ENCODE measurements at regions of chr3 and their contacts with region 1.

Region 1: GRCh38 chr3:12484198-12484974 is at the start of gene TSEN2:
- DNase-seq: peak; percentile 89 to 98
- H3K4me3 ChIP-seq: peak within 1 kb of the TSS; percentile 68 to 86 (median 83)
- H3K27ac ChIP-seq: peak within 1 kb of the TSS; percentile 75
- H3K4me1 ChIP-seq: peaks cover 2 to 8% (median 5%) of the 10 kb centered on the region in 4 experiments
- H3K27me3 ChIP-seq: no peaks in the 10 kb centered on the region
- CTCF ChIP-seq: peak in 1 of 3 experiments; percentile 14; a peak in 1 of 4 replicates
- EP300 ChIP-seq: no peak
- POLR2A ChIP-seq: peak; percentile 87 to 88; a peak in 2 of 3 replicates
- RAD21 ChIP-seq: 0 out of 4 replicates have a peak, but pooled peaks of 1 of the 2 experiments have one; percentile 6
- total RNA-seq, gene TSEN2: 22.4 and 22.6 TPM in 2 replicates

Region 2: DNA sequence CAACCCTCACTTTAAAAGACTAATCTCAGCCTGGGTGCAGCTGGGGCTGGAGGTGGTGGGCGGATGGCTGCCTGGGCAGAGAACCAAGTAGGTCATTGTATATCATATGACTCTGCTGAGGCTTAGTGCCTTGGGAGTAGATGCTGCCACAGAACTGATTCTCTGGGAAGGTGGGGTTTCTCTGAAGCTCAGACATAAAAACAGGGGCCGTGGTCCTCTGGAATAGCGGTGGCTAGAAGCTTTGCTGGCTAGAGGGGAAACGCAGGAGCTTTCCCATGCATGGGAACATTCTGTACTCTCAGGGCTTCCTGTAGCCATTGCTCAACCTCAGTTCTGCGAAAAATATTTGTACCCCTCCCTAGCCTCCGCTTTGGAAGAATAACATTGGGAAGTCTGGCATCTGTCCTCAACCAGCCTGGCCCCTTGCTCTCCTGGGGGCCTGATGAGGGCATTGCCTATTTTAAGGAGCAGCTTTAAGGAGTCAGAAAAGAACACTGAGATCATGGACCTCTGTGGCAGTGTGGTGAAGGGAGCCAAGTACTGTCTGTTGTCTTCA is 340.4 kb before region 1 on chr3:
- CTCF ChIA-PET with region 1: interaction called, 25 read pairs
- POLR2A ChIA-PET with region 1: no interaction called
- DNase-seq: no peak
- H3K4me3 ChIP-seq: no peak overlapping the region
- H3K27ac ChIP-seq: no peak overlapping the region
- H3K4me1 ChIP-seq: no peaks in the 10 kb centered on the region
- H3K27me3 ChIP-seq: no peaks in the 10 kb centered on the region
- CTCF ChIP-seq: no peak
- EP300 ChIP-seq: no peak
- POLR2A ChIP-seq: no peak
- RAD21 ChIP-seq: no peak

Region 3: GRCh38 chr3:12193485-12194165 is 290.8 kb before region 1 on chr3:
- CTCF ChIA-PET with region 1: interaction called, 10 read pairs
- POLR2A ChIA-PET with region 1: no interaction called
- DNase-seq: no peak
- H3K4me3 ChIP-seq: no peak overlapping the region
- H3K27ac ChIP-seq: no peak overlapping the region
- H3K4me1 ChIP-seq: peaks cover 0 to 2% (median 0%) of the 10 kb centered on the region in 4 experiments; a peak in 1 of 7 replicates
- H3K27me3 ChIP-seq: no peaks in the 10 kb centered on the region
- CTCF ChIP-seq: no peak
- EP300 ChIP-seq: no peak
- POLR2A ChIP-seq: no peak
- RAD21 ChIP-seq: no peak

Region 4: DNA sequence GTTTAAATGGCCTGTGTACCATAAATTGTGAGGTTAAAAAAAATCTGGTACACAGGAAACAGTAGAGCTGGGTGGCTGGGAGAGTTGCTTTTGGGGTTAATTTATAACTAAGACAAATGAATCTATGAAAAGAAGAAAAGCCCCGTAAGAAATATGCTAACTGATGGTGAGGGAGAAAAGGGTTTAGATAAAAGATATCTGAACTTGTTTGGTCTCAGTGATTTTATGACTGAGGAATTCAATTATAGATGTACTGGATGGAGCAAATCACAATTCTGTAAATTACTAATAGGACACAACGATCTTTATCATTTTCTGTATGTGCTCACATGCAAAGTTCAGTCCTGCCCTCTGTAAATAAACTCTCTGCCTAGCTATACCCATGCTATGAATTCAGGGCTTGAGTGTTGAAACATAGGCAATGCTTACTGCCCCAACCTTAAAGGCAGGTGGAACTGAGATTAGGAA is 167.6 kb before region 1 on chr3:
- CTCF ChIA-PET with region 1: no interaction called
- POLR2A ChIA-PET with region 1: no interaction called
- DNase-seq: no peak
- H3K4me3 ChIP-seq: no peak overlapping the region
- H3K27ac ChIP-seq: no peak overlapping the region
- H3K4me1 ChIP-seq: no peaks in the 10 kb centered on the region
- H3K27me3 ChIP-seq: no peaks in the 10 kb centered on the region
- CTCF ChIP-seq: no peak
- EP300 ChIP-seq: no peak
- POLR2A ChIP-seq: no peak
- RAD21 ChIP-seq: no peak

Region 5: DNA sequence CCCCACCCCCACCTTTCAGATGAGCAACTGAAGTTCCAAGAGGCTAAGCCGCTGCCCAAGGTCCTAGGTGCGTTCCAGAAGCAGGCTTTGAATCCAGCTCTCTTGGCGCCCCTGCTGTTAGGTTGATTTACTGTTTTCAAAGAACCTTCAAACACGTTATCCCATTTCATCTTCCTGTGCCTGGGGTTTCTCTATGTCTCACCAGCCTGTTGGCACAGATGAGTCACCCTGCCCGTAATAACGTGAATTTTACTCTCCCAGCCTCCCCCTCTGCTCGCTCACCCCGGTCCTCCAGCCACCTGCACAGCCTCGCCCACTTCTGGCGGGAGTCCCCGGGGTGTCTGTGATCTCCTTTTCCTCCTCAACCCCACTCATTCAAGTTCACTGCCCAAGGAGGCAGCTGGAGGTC is 13.1 kb before region 1 on chr3:
- CTCF ChIA-PET with region 1: interaction called, 22 read pairs
- POLR2A ChIA-PET with region 1: interaction called, 9 read pairs
- DNase-seq: no peak
- H3K4me3 ChIP-seq: no peak overlapping the region
- H3K27ac ChIP-seq: no peak overlapping the region
- H3K4me1 ChIP-seq: peaks cover 0 to 4% (median 0%) of the 10 kb centered on the region in 4 experiments; a peak in 2 of 7 replicates
- H3K27me3 ChIP-seq: no peaks in the 10 kb centered on the region
- CTCF ChIP-seq: peak in 2 of 3 experiments; percentile 6 to 34; a peak in 2 of 4 replicates
- EP300 ChIP-seq: no peak
- POLR2A ChIP-seq: no peak
- RAD21 ChIP-seq: peak; percentile 17 to 36; a peak in 2 of 4 replicates

Region 6: DNA sequence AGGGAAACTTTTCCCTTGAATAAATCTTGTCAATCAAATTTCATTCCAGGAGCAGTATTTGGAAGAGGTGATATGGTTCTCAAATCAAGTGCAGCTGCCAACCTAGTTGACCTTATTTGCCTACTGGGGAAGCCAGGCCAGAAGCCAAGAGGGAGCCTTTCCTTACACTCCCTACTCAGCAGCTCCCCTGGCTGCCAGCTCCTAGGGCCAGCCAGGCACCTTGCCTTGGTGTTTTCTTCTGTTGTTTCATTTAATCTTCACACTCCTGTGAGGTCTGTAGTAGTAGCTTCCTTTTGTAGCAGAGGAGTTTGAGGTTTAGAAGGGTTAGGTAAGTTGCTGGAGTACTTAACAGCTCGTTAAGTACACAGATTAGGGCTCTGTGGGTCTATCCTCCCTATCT is 38.3 kb after region 1 on chr3:
- CTCF ChIA-PET with region 1: no interaction called
- POLR2A ChIA-PET with region 1: no interaction called
- DNase-seq: no peak
- H3K4me3 ChIP-seq: no peak overlapping the region
- H3K27ac ChIP-seq: no peak overlapping the region
- H3K4me1 ChIP-seq: no peaks in the 10 kb centered on the region
- H3K27me3 ChIP-seq: no peaks in the 10 kb centered on the region
- CTCF ChIP-seq: no peak
- EP300 ChIP-seq: no peak
- POLR2A ChIP-seq: no peak
- RAD21 ChIP-seq: no peak